Ovary (tissue), 10 donors: ENCODE measurements at regions of chr12 and their contacts with region 1.

Region 1: GRCh38 chr12:47377414-47378221 is 297.9 kb upstream of the AMIGO2 start:
- DNase-seq: peak; percentile 98 to 100 (median 99)
- H3K4me3 ChIP-seq: no peak overlapping the region
- H3K27ac ChIP-seq: peak overlapping the region in 1 of 2 donors; percentile 70
- H3K4me1 ChIP-seq: peaks cover 3% of the 10 kb centered on the region
- H3K27me3 ChIP-seq: no peaks in the 10 kb centered on the region
- CTCF ChIP-seq: no peak
- EP300 ChIP-seq: peak; percentile 90
- POLR2A ChIP-seq: no peak

Region 2: DNA sequence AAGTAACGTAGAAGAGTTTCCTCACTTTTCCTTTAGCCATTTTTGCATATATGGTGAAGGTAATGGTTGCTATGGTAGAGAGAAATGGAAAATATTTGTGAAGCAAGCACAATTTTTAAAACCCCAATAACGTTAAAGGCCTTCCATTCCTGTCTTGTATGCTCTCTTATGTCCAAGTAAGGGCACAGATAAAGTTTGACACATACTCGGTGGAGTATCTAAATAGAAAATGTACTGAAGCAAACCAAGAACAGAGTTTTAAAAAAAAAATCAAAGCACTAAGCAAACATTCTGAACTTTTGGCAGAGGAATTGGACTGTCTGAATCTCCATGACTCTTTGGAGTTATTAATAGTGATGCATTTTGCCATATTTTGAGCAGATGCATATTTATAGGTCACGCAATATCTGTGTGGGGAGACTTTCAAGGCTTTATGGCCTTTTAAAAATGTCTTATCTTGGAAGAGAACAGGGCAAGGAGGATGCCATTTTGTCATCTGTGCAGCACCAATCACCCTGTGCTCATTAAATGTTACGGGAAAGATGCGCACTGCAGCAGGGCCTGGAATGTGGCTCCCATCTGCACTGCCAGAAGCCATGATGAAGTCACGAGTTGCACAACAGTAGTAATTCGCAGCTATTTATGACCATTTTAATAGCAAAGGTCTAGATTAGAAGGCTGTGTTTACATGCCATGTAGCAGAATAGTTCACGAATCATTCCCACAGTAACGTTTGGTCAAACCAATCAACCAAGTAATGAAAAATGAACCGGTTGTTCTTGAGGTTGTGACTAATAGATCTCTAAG is 274.6 kb before region 1 on chr12:
- intact Hi-C with region 1: loop called in 1 of 4 experiments (anchors 5 kb)
- DNase-seq: peak; percentile 46 to 66 (median 58)
- H3K4me3 ChIP-seq: no peak overlapping the region
- H3K27ac ChIP-seq: peak overlapping the region in 1 of 2 donors; percentile 8
- H3K4me1 ChIP-seq: peaks cover 11% of the 10 kb centered on the region
- H3K27me3 ChIP-seq: no peaks in the 10 kb centered on the region
- CTCF ChIP-seq: no peak
- EP300 ChIP-seq: peak; percentile 59
- POLR2A ChIP-seq: no peak